Activated B cell treated with CpG ODN at 0.5 μM for 24 hours (primary cell): ENCODE measurements at regions of chrX and their contacts with region 1.

Region 1: DNA sequence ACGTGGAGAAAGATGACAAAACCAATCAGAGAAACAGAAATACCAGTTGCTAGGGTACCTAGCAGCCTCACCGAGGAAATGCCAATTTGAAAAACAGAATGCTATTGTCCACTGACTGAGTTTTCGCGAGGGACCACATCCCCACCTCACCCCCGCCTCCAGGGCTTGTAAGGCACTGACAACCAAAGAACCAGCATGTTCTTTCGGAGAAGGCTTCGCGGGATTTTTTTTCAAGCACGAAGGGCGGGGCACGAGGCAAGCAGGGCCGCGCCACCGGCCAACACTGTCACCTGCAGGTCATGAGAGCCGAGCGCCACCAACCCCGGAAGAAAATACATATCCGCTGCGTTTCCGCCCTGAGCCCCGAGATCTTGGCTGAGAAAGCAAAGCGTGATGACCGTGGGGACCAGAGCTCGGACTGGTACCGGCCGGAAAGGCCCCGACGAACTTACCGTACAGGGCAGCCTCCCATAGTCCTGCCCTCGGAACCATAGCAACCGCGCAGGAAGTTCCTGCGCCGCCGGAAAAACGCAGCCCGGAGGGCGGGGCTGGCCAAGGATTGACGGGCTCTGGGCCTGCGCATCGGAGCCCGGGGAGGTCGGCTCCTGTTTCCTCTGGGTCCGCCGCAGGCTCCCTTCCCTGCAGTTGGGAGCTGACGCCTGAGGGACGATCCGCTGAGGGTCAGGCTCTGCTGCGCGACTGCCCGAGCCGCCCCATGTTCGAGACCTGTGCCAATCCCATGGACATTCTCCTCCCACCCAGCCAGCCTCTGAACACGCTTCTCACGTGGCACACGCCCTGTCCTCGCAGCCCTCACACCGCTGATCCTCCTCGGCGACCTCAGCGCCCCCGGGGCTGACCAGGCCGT is 59.2 kb upstream of the PAGE5 start:
- DNase-seq: peak; percentile 81
- ATAC-seq: peak; percentile 93
- H3K4me3 Mint-ChIP-seq: peak overlapping the region; percentile 89
- H3K27ac Mint-ChIP-seq: peak overlapping the region; percentile 94
- H3K4me1 Mint-ChIP-seq: peaks cover 11% of the 10 kb centered on the region
- H3K27me3 Mint-ChIP-seq: no peaks in the 10 kb centered on the region
- CTCF ChIP-seq: no peak

Region 2: DNA sequence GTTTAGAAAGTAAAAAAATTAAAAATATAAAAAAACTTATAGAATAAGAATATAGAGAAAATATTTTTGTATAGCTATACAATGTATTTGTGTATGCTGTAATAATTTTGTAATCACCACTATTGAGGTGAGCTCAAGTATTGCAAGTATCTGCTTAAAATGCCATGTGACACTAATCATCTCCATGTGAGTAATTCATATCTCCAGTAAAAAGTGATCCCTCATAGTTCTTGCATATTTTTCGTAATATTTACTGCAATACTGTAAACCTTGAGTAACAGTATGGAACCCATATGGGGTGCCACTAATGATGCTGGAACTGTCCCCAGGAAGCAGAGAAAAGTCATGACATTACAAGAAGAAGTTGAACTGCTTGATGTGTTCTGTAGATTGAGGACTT is 1431.2 kb before region 1 on chrX:
- CTCF ChIA-PET with region 1: no interaction called
- POLR2A ChIA-PET with region 1: no interaction called
- intact Hi-C with region 1: no loop called
- DNase-seq: no peak
- ATAC-seq: no peak
- H3K4me3 Mint-ChIP-seq: no peak overlapping the region
- H3K27ac Mint-ChIP-seq: no peak overlapping the region
- H3K4me1 Mint-ChIP-seq: peaks cover 7% of the 10 kb centered on the region
- H3K27me3 Mint-ChIP-seq: no peaks in the 10 kb centered on the region
- CTCF ChIP-seq: no peak

Region 3: DNA sequence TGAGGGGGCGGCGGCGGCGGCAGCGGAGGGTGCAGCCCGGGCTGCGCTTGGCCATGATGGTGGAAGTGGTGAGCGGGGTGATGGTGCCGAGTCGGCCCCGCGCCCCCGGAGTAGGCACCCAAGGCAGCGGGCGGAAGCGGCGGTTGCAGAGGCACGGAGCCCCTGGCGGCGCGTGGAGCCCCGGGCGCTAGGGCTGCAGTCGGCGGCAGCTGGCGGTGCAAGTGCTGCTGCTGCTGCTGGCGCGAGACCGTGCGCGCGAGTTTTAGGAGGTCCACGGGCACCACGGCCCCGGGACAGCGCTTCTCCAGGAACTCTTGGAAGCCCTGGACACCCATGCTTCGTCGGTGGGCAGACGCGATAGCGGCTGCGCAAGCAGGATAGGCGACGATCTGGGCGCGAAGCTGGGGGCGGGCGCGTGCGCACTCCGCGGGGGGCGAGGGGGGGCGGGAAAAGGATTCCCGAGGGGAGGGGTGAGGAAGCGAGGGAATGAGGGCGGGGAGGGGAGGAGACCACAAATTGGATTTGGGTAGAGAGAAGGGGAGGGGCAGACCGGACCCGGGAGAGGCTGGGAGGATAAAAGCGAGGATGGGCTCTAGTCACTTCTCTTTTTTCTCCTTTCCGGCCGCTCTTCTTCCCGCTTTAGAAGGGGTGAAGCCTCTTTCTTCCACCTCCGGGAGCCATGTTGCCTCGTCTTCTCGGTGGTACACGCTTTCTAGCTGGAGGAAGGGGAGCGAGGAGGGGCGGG is 977.9 kb before region 1 on chrX and contains the start of gene FAM120C:
- CTCF ChIA-PET with region 1: no interaction called
- POLR2A ChIA-PET with region 1: no interaction called
- intact Hi-C with region 1: loop called (anchors 1 kb)
- DNase-seq: peak; percentile 41
- ATAC-seq: peak; percentile 79
- H3K4me3 Mint-ChIP-seq: peak within 1 kb of the TSS; percentile 83
- H3K27ac Mint-ChIP-seq: peak within 1 kb of the TSS; percentile 85
- H3K4me1 Mint-ChIP-seq: peaks cover 41% of the 10 kb centered on the region
- H3K27me3 Mint-ChIP-seq: no peaks in the 10 kb centered on the region
- CTCF ChIP-seq: no peak
- total RNA-seq, gene FAM120C: 14.0 and 20.2 TPM in 2 replicates

Region 4: DNA sequence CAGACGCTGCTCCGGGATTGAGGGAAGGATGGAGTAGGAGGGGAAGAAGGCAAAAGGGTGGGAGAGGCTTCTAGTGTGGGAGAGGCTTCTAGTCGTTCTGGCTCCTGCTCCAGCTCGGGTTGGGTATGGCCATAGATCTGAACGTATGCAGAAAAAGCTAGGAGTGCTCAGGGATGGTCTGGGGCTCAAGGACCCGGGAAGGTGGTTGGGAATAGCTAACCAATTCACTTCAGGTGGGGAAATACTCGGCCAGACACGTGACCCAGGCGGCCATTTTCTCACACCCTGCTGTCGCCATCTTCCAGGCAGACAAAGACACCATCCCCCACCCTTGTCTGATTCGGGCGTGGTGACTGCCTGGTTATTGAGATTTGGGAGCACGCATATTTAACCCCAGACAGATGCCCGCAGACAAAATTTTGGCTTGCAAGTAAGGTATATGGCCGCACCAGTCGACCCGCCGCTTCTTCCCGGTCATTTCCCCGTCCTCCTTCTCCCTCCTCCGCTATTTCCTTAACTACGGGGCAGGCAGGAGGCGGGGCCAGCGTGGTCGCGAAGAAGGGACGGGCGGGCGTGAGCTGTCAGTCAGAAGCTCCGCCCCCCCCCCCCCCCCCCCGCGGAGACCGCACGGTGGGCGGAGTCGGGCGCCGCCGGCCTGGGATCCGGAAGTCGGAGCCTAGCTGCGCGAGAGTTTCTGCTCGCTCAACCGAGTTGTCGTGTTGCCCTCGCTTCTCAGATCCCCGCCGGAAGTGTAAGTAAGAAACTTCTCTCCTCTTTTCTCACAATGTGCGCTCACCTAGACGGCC is 631.2 kb before region 1 on chrX and contains the start of gene GNL3L:
- CTCF ChIA-PET with region 1: no interaction called
- POLR2A ChIA-PET with region 1: no interaction called
- intact Hi-C with region 1: loop called (anchors 10 kb)
- DNase-seq: peak; percentile 66
- ATAC-seq: peak; percentile 83
- H3K4me3 Mint-ChIP-seq: peak within 1 kb of the TSS; percentile 94
- H3K27ac Mint-ChIP-seq: peak within 1 kb of the TSS; percentile 97
- H3K4me1 Mint-ChIP-seq: peaks cover 43% of the 10 kb centered on the region
- H3K27me3 Mint-ChIP-seq: no peaks in the 10 kb centered on the region
- CTCF ChIP-seq: no peak
- total RNA-seq, gene GNL3L: 67.1 and 70.5 TPM in 2 replicates

Region 5: GRCh38 chrX:54808605-54809483 is 352.1 kb before region 1 on chrX:
- CTCF ChIA-PET with region 1: no interaction called
- POLR2A ChIA-PET with region 1: no interaction called
- intact Hi-C with region 1: loop called (anchors 2 kb)
- DNase-seq: peak; percentile 73
- ATAC-seq: peak; percentile 96
- H3K4me3 Mint-ChIP-seq: peak overlapping the region; percentile 92
- H3K27ac Mint-ChIP-seq: peak overlapping the region; percentile 91
- H3K4me1 Mint-ChIP-seq: peaks cover 14% of the 10 kb centered on the region
- H3K27me3 Mint-ChIP-seq: no peaks in the 10 kb centered on the region
- CTCF ChIP-seq: no peak

Region 6: GRCh38 chrX:54999717-55000598 is 161.0 kb before region 1 on chrX and contains the start of gene APEX2:
- CTCF ChIA-PET with region 1: no interaction called
- POLR2A ChIA-PET with region 1: interaction called, 3 read pairs
- intact Hi-C with region 1: loop called (anchors 1 kb)
- DNase-seq: peak; percentile 74
- ATAC-seq: peak; percentile 95
- H3K4me3 Mint-ChIP-seq: peak within 1 kb of the TSS; percentile 94
- H3K27ac Mint-ChIP-seq: peak within 1 kb of the TSS; percentile 89
- H3K4me1 Mint-ChIP-seq: peaks cover 19% of the 10 kb centered on the region
- H3K27me3 Mint-ChIP-seq: no peaks in the 10 kb centered on the region
- CTCF ChIP-seq: no peak
- total RNA-seq, gene APEX2: 19.6 and 22.2 TPM in 2 replicates

Region 7: DNA sequence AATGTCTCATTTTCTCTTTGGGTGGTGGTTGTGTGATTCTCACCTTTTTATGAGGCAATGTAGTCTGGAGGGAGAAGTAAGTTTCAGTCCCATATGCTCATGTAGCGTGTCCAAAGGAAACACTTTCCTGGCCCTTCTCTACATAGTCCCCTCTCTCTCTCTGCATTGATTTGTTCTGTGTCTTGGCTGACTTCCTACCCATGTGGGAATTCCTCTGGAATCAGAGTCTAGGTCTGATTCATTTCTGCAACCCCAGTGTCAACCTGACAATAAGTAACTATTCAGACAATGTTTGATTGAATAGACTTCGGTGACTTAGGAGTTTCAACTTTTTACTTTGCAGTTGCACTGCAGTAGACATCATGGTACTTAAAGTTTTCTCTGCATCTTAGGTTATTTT is 127.5 kb before region 1 on chrX:
- CTCF ChIA-PET with region 1: no interaction called
- POLR2A ChIA-PET with region 1: no interaction called
- intact Hi-C with region 1: no loop called
- DNase-seq: no peak
- ATAC-seq: no peak
- H3K4me3 Mint-ChIP-seq: no peak overlapping the region
- H3K27ac Mint-ChIP-seq: no peak overlapping the region
- H3K4me1 Mint-ChIP-seq: no peaks in the 10 kb centered on the region
- H3K27me3 Mint-ChIP-seq: no peaks in the 10 kb centered on the region
- CTCF ChIP-seq: no peak

Region 8: GRCh38 chrX:55546956-55547355 is 386.0 kb after region 1 on chrX:
- CTCF ChIA-PET with region 1: no interaction called
- POLR2A ChIA-PET with region 1: no interaction called
- intact Hi-C with region 1: no loop called
- DNase-seq: no peak
- ATAC-seq: no peak
- H3K4me3 Mint-ChIP-seq: no peak overlapping the region
- H3K27ac Mint-ChIP-seq: no peak overlapping the region
- H3K4me1 Mint-ChIP-seq: no peaks in the 10 kb centered on the region
- H3K27me3 Mint-ChIP-seq: peaks cover 5% of the 10 kb centered on the region
- CTCF ChIP-seq: no peak

Region 9: DNA sequence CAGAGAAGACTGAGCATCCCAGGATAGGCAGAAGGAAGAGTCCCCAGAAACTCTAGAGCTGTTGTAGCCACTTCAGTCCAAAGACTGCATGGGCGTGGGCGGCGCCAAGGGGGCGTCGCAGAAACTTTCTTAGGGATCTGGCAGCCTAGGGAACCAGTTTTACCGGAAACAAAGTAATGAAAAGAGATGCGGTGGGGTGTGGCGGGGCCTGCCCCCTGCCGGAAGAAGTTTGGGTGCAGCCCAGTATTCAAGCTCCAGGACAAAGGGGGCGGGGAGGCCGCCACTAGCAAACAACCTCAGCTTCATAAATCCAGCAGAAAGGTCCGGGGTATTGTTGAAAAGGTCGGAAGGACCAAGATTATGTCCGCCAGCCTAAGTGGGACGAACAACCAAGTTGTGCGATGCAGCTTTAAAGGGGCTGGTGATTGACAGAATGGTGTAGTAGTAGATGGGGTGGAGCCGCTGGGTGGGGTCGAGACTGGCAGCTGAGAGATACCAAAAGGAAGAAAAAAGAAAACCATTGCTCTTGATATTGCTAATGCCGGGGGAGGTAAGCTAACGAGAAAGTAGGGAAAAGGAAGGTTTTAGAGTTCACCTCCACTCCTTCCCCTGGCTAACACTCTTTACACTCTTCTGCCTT is 747.2 kb after region 1 on chrX:
- CTCF ChIA-PET with region 1: no interaction called
- POLR2A ChIA-PET with region 1: interaction called, 3 read pairs
- intact Hi-C with region 1: loop called (anchors 2 kb)
- DNase-seq: peak; percentile 34
- ATAC-seq: peak; percentile 83
- H3K4me3 Mint-ChIP-seq: peak overlapping the region; percentile 93
- H3K27ac Mint-ChIP-seq: peak overlapping the region; percentile 94
- H3K4me1 Mint-ChIP-seq: peaks cover 38% of the 10 kb centered on the region
- H3K27me3 Mint-ChIP-seq: no peaks in the 10 kb centered on the region
- CTCF ChIP-seq: no peak

Region 10: GRCh38 chrX:56563231-56564161 is 1402.6 kb after region 1 on chrX and contains the start of gene UBQLN2:
- CTCF ChIA-PET with region 1: no interaction called
- POLR2A ChIA-PET with region 1: no interaction called
- intact Hi-C with region 1: loop called (anchors 10 kb)
- DNase-seq: peak; percentile 61
- ATAC-seq: peak; percentile 87
- H3K4me3 Mint-ChIP-seq: peak within 1 kb of the TSS; percentile 88
- H3K27ac Mint-ChIP-seq: peak within 1 kb of the TSS; percentile 96
- H3K4me1 Mint-ChIP-seq: peaks cover 28% of the 10 kb centered on the region
- H3K27me3 Mint-ChIP-seq: no peaks in the 10 kb centered on the region
- CTCF ChIP-seq: no peak
- total RNA-seq, gene UBQLN2: 21.3 and 26.6 TPM in 2 replicates